ENCODE measurements at regions of chr15 and their contacts with region 1.

Region 1: GRCh38 chr15:85504749-85505676 is 124.6 kb downstream of the AKAP13 start:
- DNase-seq: no peak
- ATAC-seq: peak; percentile 50

Region 2: DNA sequence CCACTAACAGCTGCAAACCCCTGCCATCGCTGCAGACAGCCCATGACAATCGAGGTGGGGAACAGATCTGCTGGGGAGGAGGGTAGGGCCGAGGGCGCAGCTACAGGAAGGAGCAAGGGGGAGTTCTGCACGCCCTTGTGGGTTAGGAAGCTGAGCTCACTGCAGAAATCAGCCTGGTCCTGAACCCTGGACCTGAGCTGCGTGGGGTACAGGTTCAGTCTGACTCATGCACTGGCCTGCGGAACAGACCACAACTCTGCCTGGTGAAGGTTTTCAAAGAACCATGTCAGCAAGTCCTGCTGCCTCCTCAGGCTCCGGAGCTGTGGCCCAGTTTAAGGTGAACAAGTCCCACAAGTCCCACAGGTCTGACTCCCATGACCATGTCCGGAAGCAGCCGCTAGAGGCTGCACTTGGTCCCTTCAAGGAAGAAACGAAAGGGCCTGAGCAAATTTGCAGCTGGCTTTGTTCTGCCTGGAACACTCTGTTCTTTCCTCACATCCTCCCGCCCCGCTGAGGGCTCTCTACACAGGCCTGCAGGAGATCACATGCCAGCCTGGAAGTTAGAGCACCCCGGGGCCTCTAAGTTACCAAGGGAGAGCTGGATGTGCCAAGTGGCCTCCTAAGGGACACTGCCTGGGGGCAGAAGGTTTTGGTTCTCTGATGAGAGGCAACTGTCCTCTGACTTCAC is 174.0 kb before region 1 on chr15:
- intact Hi-C with region 1: loop called (anchors 5 kb)
- DNase-seq: peak; percentile 94
- ATAC-seq: peak; percentile 96

Region 3: GRCh38 chr15:85730001-85730820 is 225.2 kb after region 1 on chr15:
- intact Hi-C with region 1: loop called (anchors 5 kb)
- DNase-seq: no peak
- ATAC-seq: peak; percentile 54

Measured in Right ventricle myocardium inferior (tissue), 1 donor.